A549 (cell line): ENCODE measurements at regions of chr1 and their contacts with region 1.

Region 1: DNA sequence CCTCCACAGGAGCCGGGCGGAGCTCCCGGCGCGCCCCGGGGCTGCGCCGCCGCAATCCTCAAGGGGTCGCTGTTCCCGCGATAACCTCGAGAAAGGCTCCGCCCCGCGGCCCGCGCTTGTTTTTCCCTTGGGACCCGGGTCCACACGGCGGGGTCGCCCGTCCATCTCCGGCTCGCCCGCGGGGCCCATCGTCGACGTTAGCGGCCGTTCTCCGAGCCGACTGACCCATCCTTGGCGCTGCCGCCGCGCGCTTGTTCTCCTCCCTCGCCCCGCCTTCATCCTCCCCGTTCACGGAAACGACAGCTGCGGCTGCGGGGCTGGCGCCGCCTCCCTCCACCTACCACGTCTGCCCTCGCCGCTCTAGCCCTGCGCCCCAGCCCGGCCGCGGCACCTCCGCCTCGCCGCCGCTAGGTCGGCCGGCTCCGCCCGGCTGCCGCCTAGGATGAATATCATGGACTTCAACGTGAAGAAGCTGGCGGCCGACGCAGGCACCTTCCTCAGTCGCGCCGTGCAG is at the start of gene SH3GLB1:
- DNase-seq: peak; percentile 52 to 86
- ATAC-seq: peak; percentile 97 to 98
- H3K4me3 ChIP-seq: peak within 1 kb of the TSS; percentile 86
- H3K27ac ChIP-seq: peak within 1 kb of the TSS; percentile 95 to 97
- H3K4me1 ChIP-seq: peaks cover 14% of the 10 kb centered on the region; the same call in 2 of the 3 replicates
- CTCF ChIP-seq: peak; percentile 78
- EP300 ChIP-seq: no peak
- POLR2A ChIP-seq: peak; percentile 61
- RAD21 ChIP-seq: peak; percentile 15 to 63; a peak in 4 of 5 replicates
- polyA plus RNA-seq, gene SH3GLB1: 30.2 and 33.9 TPM in 2 replicates

Region 2: GRCh38 chr1:86733340-86733739 is 28.8 kb after region 1 on chr1:
- CTCF ChIA-PET with region 1: interaction called, 16 read pairs
- POLR2A ChIA-PET with region 1: no interaction called
- DNase-seq: no peak
- ATAC-seq: no peak
- H3K4me3 ChIP-seq: no peak overlapping the region
- H3K27ac ChIP-seq: no peak overlapping the region
- H3K4me1 ChIP-seq: no peaks in the 10 kb centered on the region
- CTCF ChIP-seq: no peak
- EP300 ChIP-seq: no peak
- POLR2A ChIP-seq: no peak
- RAD21 ChIP-seq: no peak

Region 3: GRCh38 chr1:86774305-86775295 is 70.1 kb after region 1 on chr1:
- CTCF ChIA-PET with region 1: interaction called, 5 read pairs
- POLR2A ChIA-PET with region 1: interaction called, 13 read pairs
- DNase-seq: peak; percentile 40 to 71
- ATAC-seq: peak; percentile 87 to 88
- H3K4me3 ChIP-seq: peak overlapping the region; percentile 26
- H3K27ac ChIP-seq: peak overlapping the region; percentile 84 to 86
- H3K4me1 ChIP-seq: peaks cover 44% of the 10 kb centered on the region
- CTCF ChIP-seq: no peak
- EP300 ChIP-seq: peak; percentile 70 to 91; a peak in 4 of 5 replicates
- POLR2A ChIP-seq: no peak
- RAD21 ChIP-seq: no peak